Posterior vena cava (tissue), 2 donors: ENCODE measurements at regions of chr5 and their contacts with region 1.

Region 1: DNA sequence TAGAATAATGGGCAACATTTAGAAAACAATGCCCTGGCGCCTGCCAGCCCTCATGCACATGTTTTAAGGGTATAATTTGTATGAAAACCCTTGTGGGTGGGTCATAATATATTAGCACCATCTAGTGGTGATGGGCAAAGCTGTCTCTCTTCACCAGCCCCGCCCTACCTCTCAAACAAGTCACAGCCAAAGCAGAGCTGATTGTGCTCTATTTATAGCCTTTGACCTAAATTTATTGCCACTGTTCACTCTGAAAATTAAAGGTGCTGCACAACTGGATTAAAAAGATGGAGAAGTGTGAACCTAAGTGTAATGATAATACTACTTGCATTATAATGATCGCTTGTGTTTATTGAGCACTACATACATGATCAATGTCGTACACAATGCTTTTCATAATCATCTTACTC is 131.9 kb upstream of the ANKH start:
- DNase-seq: no peak

Region 2: DNA sequence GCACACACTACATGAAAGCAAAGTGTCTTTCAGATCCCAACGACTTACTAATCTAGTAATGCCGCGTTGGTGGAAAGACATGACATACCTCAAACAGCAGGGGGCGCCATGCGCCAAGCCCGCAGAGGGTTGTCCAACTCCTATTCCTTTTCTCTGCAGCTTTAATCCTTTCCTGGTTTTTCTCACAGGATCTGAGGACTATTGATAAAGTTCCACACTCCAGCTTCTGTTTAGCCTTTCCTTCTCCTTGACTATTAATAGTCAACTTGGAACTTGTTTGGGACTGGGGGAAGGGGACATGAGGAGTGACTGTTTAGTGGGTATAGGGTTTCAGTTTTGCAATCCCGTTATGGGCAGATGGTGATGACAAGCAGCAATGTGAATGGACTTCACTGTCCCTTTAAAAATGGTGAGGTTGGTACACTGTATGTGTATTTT is 276.1 kb before region 1 on chr5:
- intact Hi-C with region 1: loop called in 1 of 2 experiments (anchors 5 kb)
- DNase-seq: peak; percentile 95

Region 3: DNA sequence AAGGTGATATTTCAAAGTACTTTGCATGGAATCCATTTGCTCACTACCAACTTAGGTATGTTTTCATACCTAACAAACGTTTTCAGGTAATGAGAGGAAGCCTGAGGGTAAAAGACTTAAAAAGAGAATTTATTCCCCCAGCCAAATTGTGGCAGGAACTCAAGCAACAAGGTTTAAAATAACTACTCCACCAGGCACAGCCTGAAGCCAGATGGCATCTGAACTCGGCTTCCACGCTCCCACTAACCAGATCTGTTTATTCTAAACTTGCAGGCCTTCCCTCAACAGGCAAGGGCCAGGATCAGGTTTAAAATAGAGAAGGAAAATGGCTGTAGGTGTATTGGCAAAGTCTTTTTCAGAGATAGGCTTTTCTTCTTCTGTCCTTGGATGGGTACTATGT is 249.6 kb before region 1 on chr5:
- intact Hi-C with region 1: no loop called
- DNase-seq: no peak

Region 4: GRCh38 chr5:14871210-14872069 is 132.1 kb before region 1 on chr5 and contains the start of gene ANKH:
- intact Hi-C with region 1: loop called in 1 of 2 experiments (anchors 10 kb)
- DNase-seq: peak; percentile 93
- total RNA-seq, gene ANKH: 93.8 to 94.1 TPM